Endothelial cell of umbilical vein (primary cell): ENCODE measurements at regions of chr16 and their contacts with region 1.

Region 1: GRCh38 chr16:31117391-31118197 is at the start of gene KAT8:
- DNase-seq: peak; percentile 98
- H3K4me3 ChIP-seq: peak within 1 kb of the TSS; percentile 54 to 79 (median 79)
- H3K27ac ChIP-seq: peak within 1 kb of the TSS; percentile 77
- H3K4me1 ChIP-seq: peaks cover 7% of the 10 kb centered on the region
- H3K27me3 ChIP-seq: no peaks in the 10 kb centered on the region
- CTCF ChIP-seq: no peak
- POLR2A ChIP-seq: peak; percentile 84
- total RNA-seq, gene KAT8: 42.1 and 42.8 TPM in 2 replicates

Region 2: GRCh38 chr16:30805370-30806169 is 312.0 kb before region 1 on chr16:
- CTCF ChIA-PET with region 1: no interaction called
- POLR2A ChIA-PET with region 1: no interaction called
- dilution Hi-C with region 1: no loop called
- intact Hi-C with region 1: no loop called
- DNase-seq: peak; percentile 74
- H3K4me3 ChIP-seq: peak overlapping the region; percentile 18 to 57 (median 37)
- H3K27ac ChIP-seq: peak overlapping the region; percentile 18
- H3K4me1 ChIP-seq: peaks cover 8% of the 10 kb centered on the region
- H3K27me3 ChIP-seq: no peaks in the 10 kb centered on the region
- CTCF ChIP-seq: peak in 1 of 2 donors; percentile 3
- POLR2A ChIP-seq: peak; percentile 88

Region 3: GRCh38 chr16:31032736-31033708 is 84.6 kb before region 1 on chr16 and contains the start of gene STX4:
- CTCF ChIA-PET with region 1: no interaction called
- POLR2A ChIA-PET with region 1: no interaction called
- dilution Hi-C with region 1: no loop called
- intact Hi-C with region 1: loop called (anchors 1 kb)
- DNase-seq: peak; percentile 94
- H3K4me3 ChIP-seq: peak within 1 kb of the TSS; percentile 63 to 75 (median 71)
- H3K27ac ChIP-seq: peak within 1 kb of the TSS; percentile 85
- H3K4me1 ChIP-seq: peaks cover 11% of the 10 kb centered on the region
- H3K27me3 ChIP-seq: no peaks in the 10 kb centered on the region
- CTCF ChIP-seq: no peak
- POLR2A ChIP-seq: no peak
- total RNA-seq, gene STX4: 60.7 and 65.2 TPM in 2 replicates